Ovary (tissue), 10 donors: ENCODE measurements at regions of chr6 and their contacts with region 1.

Region 1: DNA sequence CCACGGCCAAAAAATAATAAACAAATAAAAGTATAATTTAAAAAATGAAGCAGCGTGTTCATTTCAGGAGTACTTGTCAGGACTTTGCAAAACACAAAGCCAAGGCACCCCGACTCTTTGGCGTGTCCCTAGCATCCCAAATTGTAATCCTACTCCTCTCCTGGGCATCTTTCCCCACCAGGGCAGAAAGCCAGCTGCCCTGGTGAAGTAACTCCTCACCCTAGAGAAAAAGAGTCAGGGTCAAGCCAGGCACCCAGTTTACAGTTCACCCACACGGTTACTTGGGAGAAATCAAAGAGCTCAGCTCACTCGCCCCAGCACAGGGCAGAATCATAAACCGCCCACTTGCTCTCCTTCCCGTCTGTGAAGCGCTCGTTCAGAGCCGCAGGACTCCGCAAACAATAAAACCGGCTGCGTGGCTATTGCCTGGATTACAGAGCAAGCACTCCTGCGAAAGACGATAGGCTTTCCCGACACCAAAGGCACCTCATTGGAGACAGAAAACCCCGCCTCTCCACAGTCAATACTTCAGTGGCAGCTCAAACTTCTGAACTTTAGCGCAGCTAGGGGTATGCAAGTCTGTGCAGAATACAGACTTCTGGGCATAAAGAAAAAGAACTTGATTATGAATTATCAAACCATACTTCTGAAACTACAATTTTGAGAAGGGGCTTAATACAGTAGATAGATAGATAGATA is 73.0 kb upstream of the NHSL1 start:
- DNase-seq: peak; percentile 51 to 69 (median 62)
- H3K4me3 ChIP-seq: peak overlapping the region; percentile 29
- H3K27ac ChIP-seq: peak overlapping the region in 1 of 2 donors; percentile 37
- H3K4me1 ChIP-seq: peaks cover 5% of the 10 kb centered on the region
- H3K27me3 ChIP-seq: no peaks in the 10 kb centered on the region
- CTCF ChIP-seq: no peak
- EP300 ChIP-seq: no peak
- POLR2A ChIP-seq: no peak

Region 2: DNA sequence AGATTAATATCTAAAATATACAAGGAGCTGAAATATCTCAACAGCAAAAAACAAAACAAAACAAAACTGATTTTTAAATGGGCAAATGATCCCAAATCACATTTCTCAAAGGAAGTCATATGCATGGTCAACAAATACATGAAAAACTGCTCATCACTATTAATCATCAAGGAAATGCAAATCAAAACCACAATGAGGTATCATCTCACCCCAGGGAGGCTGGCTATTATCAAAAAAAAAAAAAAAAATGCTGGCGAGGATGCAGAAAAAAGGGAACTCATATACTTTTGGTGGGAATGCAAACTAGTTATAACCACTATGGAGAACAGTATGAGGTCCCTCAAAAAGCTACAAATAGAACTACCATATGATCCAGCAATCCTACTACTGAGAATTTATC is 381.1 kb after region 1 on chr6:
- intact Hi-C with region 1: no loop called
- DNase-seq: no peak
- H3K4me3 ChIP-seq: no peak overlapping the region
- H3K27ac ChIP-seq: no peak overlapping the region
- H3K4me1 ChIP-seq: peaks cover 1% of the 10 kb centered on the region
- H3K27me3 ChIP-seq: no peaks in the 10 kb centered on the region
- CTCF ChIP-seq: no peak
- EP300 ChIP-seq: no peak
- POLR2A ChIP-seq: no peak

Region 3: DNA sequence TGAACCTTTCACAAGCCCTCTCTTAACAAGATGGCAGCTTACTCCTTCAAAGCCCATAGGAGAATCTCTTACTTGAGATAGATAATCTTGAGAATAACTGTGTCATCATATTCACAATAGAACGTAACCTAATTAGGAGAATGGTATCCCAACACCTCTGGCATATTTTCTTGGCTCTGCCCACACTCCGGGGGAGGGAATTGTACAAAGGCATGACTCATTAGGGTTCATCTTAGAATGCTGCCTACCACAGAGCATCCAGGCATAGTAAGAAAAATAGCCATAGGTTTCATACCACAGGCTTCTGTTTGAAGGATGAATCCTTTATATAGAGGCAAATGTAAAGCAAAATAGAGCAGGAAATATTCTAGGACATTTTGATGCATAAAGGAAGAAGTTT is 1902.8 kb after region 1 on chr6:
- intact Hi-C with region 1: loop called in 1 of 4 experiments (anchors 5 kb)
- DNase-seq: no peak
- H3K4me3 ChIP-seq: no peak overlapping the region
- H3K27ac ChIP-seq: no peak overlapping the region
- H3K4me1 ChIP-seq: no peaks in the 10 kb centered on the region
- H3K27me3 ChIP-seq: no peaks in the 10 kb centered on the region
- CTCF ChIP-seq: no peak
- EP300 ChIP-seq: no peak
- POLR2A ChIP-seq: no peak